Activated CD4-positive, alpha-beta T cell treated with anti-CD3 and anti-CD28 coated beads for 36 hours (primary cell): ENCODE measurements at regions of chr10 and their contacts with region 1.

Region 1: DNA sequence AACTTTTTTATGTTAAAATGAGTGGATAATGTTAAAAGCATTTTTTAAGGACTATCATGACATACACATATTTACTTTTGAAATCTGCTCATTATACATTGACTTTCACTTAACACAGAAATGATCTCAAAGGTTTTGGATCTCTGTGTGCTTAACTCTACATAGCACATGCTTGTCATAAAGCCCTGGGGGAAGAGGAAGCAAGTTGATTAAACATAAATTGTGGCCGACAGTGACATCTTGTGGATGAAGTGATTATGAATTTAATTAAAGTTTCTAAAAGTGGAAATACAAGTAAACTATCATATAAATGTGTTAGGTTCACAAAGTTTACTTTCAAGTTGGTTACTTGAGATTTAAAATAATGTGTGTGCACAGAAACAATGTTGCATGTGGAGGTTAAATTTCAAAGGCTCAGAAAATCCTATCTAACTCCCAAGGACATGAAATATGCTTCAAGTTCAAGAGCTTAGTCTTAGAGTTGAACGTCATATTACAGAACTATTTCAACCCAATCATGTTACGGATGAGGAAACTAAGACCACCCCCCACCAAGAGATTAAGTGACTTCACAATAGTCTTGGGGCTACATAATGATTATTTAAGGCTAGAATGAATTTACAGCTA is 1247.7 kb downstream of the GATA3 start:
- DNase-seq: peak; percentile 16
- ATAC-seq: no peak
- H3K4me3 Mint-ChIP-seq: no peak overlapping the region
- H3K27ac Mint-ChIP-seq: no peak overlapping the region
- H3K4me1 Mint-ChIP-seq: no peaks in the 10 kb centered on the region
- H3K27me3 Mint-ChIP-seq: peaks cover 15% of the 10 kb centered on the region

Region 2: GRCh38 chr10:7687228-7687907 is 1614.9 kb before region 1 on chr10:
- CTCF ChIA-PET with region 1: no interaction called
- POLR2A ChIA-PET with region 1: no interaction called
- intact Hi-C with region 1: loop called (anchors 5 to 10 kb)
- DNase-seq: peak; percentile 89
- ATAC-seq: peak; percentile 92
- H3K4me3 Mint-ChIP-seq: no peak overlapping the region
- H3K27ac Mint-ChIP-seq: no peak overlapping the region
- H3K4me1 Mint-ChIP-seq: peaks cover 7% of the 10 kb centered on the region
- H3K27me3 Mint-ChIP-seq: peaks cover 7% of the 10 kb centered on the region

Region 3: GRCh38 chr10:7872041-7872442 is 1430.2 kb before region 1 on chr10:
- CTCF ChIA-PET with region 1: interaction called, 3 read pairs
- POLR2A ChIA-PET with region 1: no interaction called
- intact Hi-C with region 1: loop called (anchors 1 kb)
- DNase-seq: no peak
- ATAC-seq: no peak
- H3K4me3 Mint-ChIP-seq: peak overlapping the region; percentile 56
- H3K27ac Mint-ChIP-seq: no peak overlapping the region
- H3K4me1 Mint-ChIP-seq: peaks cover 9% of the 10 kb centered on the region
- H3K27me3 Mint-ChIP-seq: no peaks in the 10 kb centered on the region

Region 4: GRCh38 chr10:8504499-8504898 is 797.7 kb before region 1 on chr10:
- CTCF ChIA-PET with region 1: no interaction called
- POLR2A ChIA-PET with region 1: no interaction called
- intact Hi-C with region 1: loop called in 1 of 2 experiments (anchors 10 kb)
- DNase-seq: no peak
- ATAC-seq: no peak
- H3K4me3 Mint-ChIP-seq: no peak overlapping the region
- H3K27ac Mint-ChIP-seq: no peak overlapping the region
- H3K4me1 Mint-ChIP-seq: peaks cover 3% of the 10 kb centered on the region
- H3K27me3 Mint-ChIP-seq: peaks cover 11% of the 10 kb centered on the region

Region 5: DNA sequence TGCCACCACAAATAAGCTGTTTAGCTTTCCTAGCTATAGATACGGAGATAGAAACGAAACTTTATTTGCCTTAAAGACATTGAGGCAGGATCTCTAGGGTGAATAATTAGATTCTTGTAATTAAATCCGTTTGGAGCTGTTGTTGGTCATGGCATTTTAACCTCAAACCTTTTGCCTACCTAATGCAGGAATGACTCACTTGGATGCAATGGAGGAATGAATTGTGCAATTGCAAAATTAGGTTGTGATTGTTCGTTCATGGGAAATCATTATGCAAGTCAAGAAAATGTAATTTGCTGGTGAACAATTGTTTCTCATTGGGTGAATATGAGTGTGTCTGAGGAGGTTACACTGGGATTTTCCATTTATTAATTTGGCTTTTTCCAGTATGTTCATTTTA is 544.2 kb before region 1 on chr10:
- CTCF ChIA-PET with region 1: no interaction called
- POLR2A ChIA-PET with region 1: no interaction called
- intact Hi-C with region 1: no loop called
- DNase-seq: no peak
- ATAC-seq: no peak
- H3K4me3 Mint-ChIP-seq: no peak overlapping the region
- H3K27ac Mint-ChIP-seq: no peak overlapping the region
- H3K4me1 Mint-ChIP-seq: peaks cover 6% of the 10 kb centered on the region
- H3K27me3 Mint-ChIP-seq: peaks cover 12% of the 10 kb centered on the region

Region 6: GRCh38 chr10:9229702-9230244 is 72.5 kb before region 1 on chr10:
- CTCF ChIA-PET with region 1: no interaction called
- POLR2A ChIA-PET with region 1: no interaction called
- intact Hi-C with region 1: loop called in 1 of 2 experiments (anchors 5 kb)
- DNase-seq: peak; percentile 20
- ATAC-seq: peak; percentile 78
- H3K4me3 Mint-ChIP-seq: peak overlapping the region; percentile 13
- H3K27ac Mint-ChIP-seq: no peak overlapping the region
- H3K4me1 Mint-ChIP-seq: peaks cover 35% of the 10 kb centered on the region
- H3K27me3 Mint-ChIP-seq: peaks cover 26% of the 10 kb centered on the region

Region 7: DNA sequence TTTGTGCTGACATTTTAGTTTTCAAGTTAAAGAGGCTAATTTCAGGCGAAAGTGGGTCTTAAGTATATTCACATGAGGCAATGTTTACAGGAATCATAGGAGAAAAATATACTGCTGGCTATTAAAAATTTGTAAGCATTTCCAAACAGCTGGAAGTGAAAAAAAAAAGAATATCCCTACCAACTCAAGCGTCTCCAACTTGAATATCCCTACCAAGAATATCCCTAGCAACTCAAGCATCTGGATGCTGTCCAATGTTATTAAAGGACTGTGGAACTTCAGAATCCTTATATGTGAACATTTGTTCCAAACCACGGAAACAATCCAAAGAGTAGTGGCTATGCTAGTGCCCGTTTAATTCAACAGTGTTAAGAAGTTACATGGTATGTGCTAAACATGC is 55.2 kb after region 1 on chr10:
- CTCF ChIA-PET with region 1: no interaction called
- POLR2A ChIA-PET with region 1: no interaction called
- intact Hi-C with region 1: no loop called
- DNase-seq: no peak
- ATAC-seq: no peak
- H3K4me3 Mint-ChIP-seq: no peak overlapping the region
- H3K27ac Mint-ChIP-seq: no peak overlapping the region
- H3K4me1 Mint-ChIP-seq: peaks cover 6% of the 10 kb centered on the region
- H3K27me3 Mint-ChIP-seq: peaks cover 6% of the 10 kb centered on the region